ENCODE measurements at regions of chr17 and their contacts with region 1.

Region 1: GRCh38 chr17:7403977-7404736 is at the start of gene TMEM256:
- DNase-seq: peak; percentile 79 to 96 (median 91)
- ATAC-seq: peak; percentile 93
- H3K4me3 ChIP-seq: peak within 1 kb of the TSS; percentile 95
- H3K4me3 Mint-ChIP-seq: peak within 1 kb of the TSS; percentile 87 to 98 (median 96)
- H3K27ac ChIP-seq: peak within 1 kb of the TSS; percentile 78
- H3K27ac Mint-ChIP-seq: peak within 1 kb of the TSS; percentile 91 to 100 (median 96)
- H3K4me1 ChIP-seq: peaks cover 9 to 10% of the 10 kb centered on the region in 2 donors
- H3K4me1 Mint-ChIP-seq: peaks cover 8 to 25% (median 21%) of the 10 kb centered on the region in 7 donors
- H3K27me3 ChIP-seq: no peaks in the 10 kb centered on the region
- H3K27me3 Mint-ChIP-seq: peaks cover 0 to 23% (median 0%) of the 10 kb centered on the region in 5 donors
- total RNA-seq, gene TMEM256: 31.5 to 58.5 (median 48.2) TPM

Region 2: GRCh38 chr17:7204828-7205461 is 199.2 kb before region 1 on chr17:
- CTCF ChIA-PET with region 1: no interaction called
- POLR2A ChIA-PET with region 1: no interaction called
- intact Hi-C with region 1: loop called in 1 of 2 experiments (anchors 1 kb)
- DNase-seq: peak; percentile 90 to 99 (median 97)
- ATAC-seq: peak; percentile 90
- H3K4me3 ChIP-seq: peak overlapping the region; percentile 77
- H3K4me3 Mint-ChIP-seq: peak overlapping the region; percentile 67 to 94 (median 85)
- H3K27ac ChIP-seq: peak overlapping the region; percentile 91
- H3K27ac Mint-ChIP-seq: peak overlapping the region; percentile 88 to 99 (median 95)
- H3K4me1 ChIP-seq: peaks cover 15 to 17% of the 10 kb centered on the region in 2 donors
- H3K4me1 Mint-ChIP-seq: peaks cover 28 to 39% (median 32%) of the 10 kb centered on the region in 7 donors
- H3K27me3 ChIP-seq: no peaks in the 10 kb centered on the region
- H3K27me3 Mint-ChIP-seq: no peaks in the 10 kb centered on the region

Region 3: GRCh38 chr17:7314719-7315569 is 89.2 kb before region 1 on chr17 and contains the start of gene GPS2:
- CTCF ChIA-PET with region 1: no interaction called
- POLR2A ChIA-PET with region 1: no interaction called
- intact Hi-C with region 1: loop called in 1 of 2 experiments (anchors 2 kb)
- DNase-seq: peak; percentile 90 to 95 (median 93)
- ATAC-seq: peak; percentile 88
- H3K4me3 ChIP-seq: peak within 1 kb of the TSS; percentile 85
- H3K4me3 Mint-ChIP-seq: peak within 1 kb of the TSS; percentile 85 to 96 (median 90)
- H3K27ac ChIP-seq: peak within 1 kb of the TSS; percentile 87
- H3K27ac Mint-ChIP-seq: peak within 1 kb of the TSS; percentile 85 to 97 (median 95)
- H3K4me1 ChIP-seq: peaks cover 30 to 35% of the 10 kb centered on the region in 2 donors
- H3K4me1 Mint-ChIP-seq: peaks cover 36 to 63% (median 54%) of the 10 kb centered on the region in 7 donors
- H3K27me3 ChIP-seq: no peaks in the 10 kb centered on the region
- H3K27me3 Mint-ChIP-seq: no peaks in the 10 kb centered on the region
- total RNA-seq, gene GPS2: 72.6 to 145 (median 107) TPM

Region 4: DNA sequence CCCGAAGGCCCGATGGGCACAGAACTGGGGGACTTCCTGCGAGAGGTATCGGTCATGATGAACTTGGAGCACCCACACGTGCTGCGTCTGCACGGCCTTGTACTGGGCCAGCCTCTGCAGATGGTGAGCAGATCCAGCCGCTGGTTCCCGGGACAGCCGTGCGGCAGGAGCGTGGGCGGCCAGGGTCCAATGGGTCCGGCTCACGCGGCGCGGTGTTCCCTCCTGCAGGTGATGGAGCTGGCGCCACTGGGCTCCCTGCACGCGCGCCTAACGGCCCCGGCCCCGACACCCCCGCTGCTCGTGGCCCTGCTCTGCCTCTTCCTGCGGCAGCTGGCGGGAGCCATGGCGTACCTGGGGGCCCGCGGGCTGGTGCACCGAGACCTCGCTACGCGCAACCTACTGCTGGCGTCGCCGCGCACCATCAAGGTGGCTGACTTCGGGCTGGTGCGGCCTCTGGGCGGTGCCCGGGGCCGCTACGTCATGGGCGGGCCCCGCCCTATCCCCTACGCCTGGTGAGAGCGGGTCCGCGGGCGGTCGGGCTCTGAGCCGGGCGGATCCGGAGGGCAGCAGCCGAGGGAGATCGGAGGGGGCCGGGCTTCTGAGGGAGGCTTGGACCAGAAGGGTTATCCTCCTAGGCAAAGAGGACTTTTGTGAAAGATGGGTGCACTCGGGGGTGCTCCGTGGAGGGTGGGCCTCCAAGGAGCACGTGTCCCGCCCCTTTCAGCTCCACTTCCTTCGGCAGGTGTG is 20.2 kb before region 1 on chr17:
- CTCF ChIA-PET with region 1: interaction called, 4 read pairs
- POLR2A ChIA-PET with region 1: interaction called, 16 read pairs
- intact Hi-C with region 1: loop called (anchors 1 kb)
- DNase-seq: peak; percentile 74 to 88 (median 86)
- ATAC-seq: peak; percentile 98
- H3K4me3 ChIP-seq: peak overlapping the region; percentile 82
- H3K4me3 Mint-ChIP-seq: peak overlapping the region; percentile 74 to 89 (median 82)
- H3K27ac ChIP-seq: peak overlapping the region; percentile 94
- H3K27ac Mint-ChIP-seq: peak overlapping the region; percentile 73 to 96 (median 94)
- H3K4me1 ChIP-seq: peaks cover 10 to 13% of the 10 kb centered on the region in 2 donors
- H3K4me1 Mint-ChIP-seq: peaks cover 10 to 23% (median 15%) of the 10 kb centered on the region in 7 donors
- H3K27me3 ChIP-seq: peaks cover 0 to 11% of the 10 kb centered on the region in 2 donors
- H3K27me3 Mint-ChIP-seq: peaks cover 27 to 37% (median 33%) of the 10 kb centered on the region in 5 donors

Region 5: DNA sequence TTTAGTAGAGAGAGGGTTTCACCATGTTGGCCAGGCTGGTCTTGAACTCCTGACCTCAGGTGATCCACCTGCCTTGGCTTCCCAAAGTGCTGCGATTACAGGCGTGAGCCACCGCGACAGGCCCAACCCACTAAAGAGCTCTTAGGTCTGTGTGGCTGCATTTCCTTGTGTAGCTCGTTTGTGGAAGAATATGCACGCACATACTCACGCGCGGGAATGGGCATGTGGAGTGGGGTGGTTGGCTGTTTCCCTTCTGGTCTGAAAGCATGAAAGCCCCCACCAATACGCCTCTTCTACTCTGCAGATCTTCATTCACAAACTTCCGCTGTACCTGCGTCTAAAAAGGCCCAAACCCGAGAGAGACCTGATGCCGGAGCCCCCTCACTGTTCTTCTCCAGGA is 50.8 kb after region 1 on chr17:
- CTCF ChIA-PET with region 1: no interaction called
- POLR2A ChIA-PET with region 1: no interaction called
- intact Hi-C with region 1: loop called in 1 of 2 experiments (anchors 1 kb)
- DNase-seq: no peak
- ATAC-seq: peak; percentile 26
- H3K4me3 ChIP-seq: peak overlapping the region; percentile 92
- H3K4me3 Mint-ChIP-seq: peak overlapping the region; percentile 89 to 96 (median 95)
- H3K27ac ChIP-seq: peak overlapping the region; percentile 77
- H3K27ac Mint-ChIP-seq: peak overlapping the region; percentile 86 to 97 (median 94)
- H3K4me1 ChIP-seq: peaks cover 17 to 20% of the 10 kb centered on the region in 2 donors
- H3K4me1 Mint-ChIP-seq: peaks cover 13 to 44% (median 36%) of the 10 kb centered on the region in 7 donors
- H3K27me3 ChIP-seq: no peaks in the 10 kb centered on the region
- H3K27me3 Mint-ChIP-seq: no peaks in the 10 kb centered on the region